B cell (primary cell): ENCODE measurements at regions of chr17 and their contacts with region 1.

Region 1: GRCh38 chr17:82105882-82106687 is 8.0 kb upstream of the FASN start:
- DNase-seq: peak; percentile 76
- ATAC-seq: peak; percentile 96
- H3K4me3 ChIP-seq: peak overlapping the region; percentile 53 to 80 (median 60)
- H3K4me3 Mint-ChIP-seq: peak overlapping the region; percentile 94
- H3K27ac ChIP-seq: peak overlapping the region; percentile 75 to 79
- H3K27ac Mint-ChIP-seq: peak overlapping the region; percentile 98
- H3K4me1 ChIP-seq: peaks cover 18 to 25% of the 10 kb centered on the region in 2 donors
- H3K4me1 Mint-ChIP-seq: peaks cover 21% of the 10 kb centered on the region
- H3K27me3 ChIP-seq: no peaks in the 10 kb centered on the region
- H3K27me3 Mint-ChIP-seq: no peaks in the 10 kb centered on the region
- CTCF ChIP-seq: peak; percentile 34

Region 2: DNA sequence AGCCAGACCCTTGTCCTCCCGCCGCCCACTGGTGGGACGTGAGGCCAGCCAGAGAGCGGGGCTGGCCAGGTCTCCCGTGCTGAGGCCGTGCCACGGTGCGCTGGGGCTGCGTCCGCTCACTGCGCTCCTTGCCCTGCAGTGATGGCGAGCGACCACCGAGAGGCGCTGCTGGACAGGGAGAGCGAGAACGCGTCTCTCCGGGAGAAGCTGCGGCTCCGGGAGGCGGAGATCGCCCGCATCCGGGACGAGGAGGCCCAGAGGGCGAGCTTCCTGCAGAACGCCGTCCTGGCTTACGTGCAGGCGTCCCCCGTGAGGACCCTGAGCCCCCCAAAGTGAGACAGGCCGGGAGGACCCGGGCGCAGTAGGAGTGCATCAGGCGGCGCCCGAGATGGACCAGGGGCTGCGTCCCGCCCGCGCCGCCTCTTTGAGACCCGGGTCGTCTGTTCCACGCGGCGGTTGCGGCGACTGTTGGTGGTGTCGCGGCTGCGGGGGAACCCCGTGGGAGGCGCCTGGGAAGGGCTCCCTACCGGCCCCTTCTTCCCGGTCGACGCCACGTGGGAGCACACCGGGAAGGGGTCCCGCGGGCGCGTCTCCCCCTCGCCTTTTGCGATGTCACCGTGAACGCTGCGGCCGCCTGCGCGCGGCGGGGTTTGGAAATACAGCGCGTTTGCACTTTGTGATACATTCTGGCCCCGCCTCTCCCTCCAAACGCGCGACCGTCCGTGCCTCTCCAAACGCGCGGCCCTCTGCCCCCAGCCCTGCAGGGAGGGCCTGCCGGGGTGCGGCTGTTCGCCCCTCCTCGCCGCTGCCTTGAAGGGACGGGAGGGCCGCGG is 75.4 kb before region 1 on chr17:
- CTCF ChIA-PET with region 1: interaction called, 6 read pairs
- POLR2A ChIA-PET with region 1: no interaction called
- intact Hi-C with region 1: loop called (anchors 1 kb)
- DNase-seq: peak; percentile 86
- ATAC-seq: peak; percentile 89
- H3K4me3 ChIP-seq: peak overlapping the region in 4 of 5 experiments; percentile 45 to 59 (median 54)
- H3K4me3 Mint-ChIP-seq: peak overlapping the region; percentile 89
- H3K27ac ChIP-seq: no peak overlapping the region
- H3K27ac Mint-ChIP-seq: peak overlapping the region; percentile 41
- H3K4me1 ChIP-seq: peaks cover 17 to 21% of the 10 kb centered on the region in 2 donors
- H3K4me1 Mint-ChIP-seq: peaks cover 17% of the 10 kb centered on the region
- H3K27me3 ChIP-seq: peaks cover 0 to 39% (median 3%) of the 10 kb centered on the region in 4 experiments
- H3K27me3 Mint-ChIP-seq: no peaks in the 10 kb centered on the region
- CTCF ChIP-seq: peak; percentile 94

Region 3: GRCh38 chr17:82153745-82154375 is 47.8 kb after region 1 on chr17:
- CTCF ChIA-PET with region 1: no interaction called
- POLR2A ChIA-PET with region 1: no interaction called
- intact Hi-C with region 1: loop called (anchors 2 kb)
- DNase-seq: peak; percentile 84
- ATAC-seq: peak; percentile 99
- H3K4me3 ChIP-seq: no peak overlapping the region
- H3K4me3 Mint-ChIP-seq: no peak overlapping the region
- H3K27ac ChIP-seq: no peak overlapping the region
- H3K27ac Mint-ChIP-seq: no peak overlapping the region
- H3K4me1 ChIP-seq: peaks cover 0 to 2% of the 10 kb centered on the region in 2 donors
- H3K4me1 Mint-ChIP-seq: no peaks in the 10 kb centered on the region
- H3K27me3 ChIP-seq: no peaks in the 10 kb centered on the region
- H3K27me3 Mint-ChIP-seq: no peaks in the 10 kb centered on the region
- CTCF ChIP-seq: peak; percentile 94

Region 4: DNA sequence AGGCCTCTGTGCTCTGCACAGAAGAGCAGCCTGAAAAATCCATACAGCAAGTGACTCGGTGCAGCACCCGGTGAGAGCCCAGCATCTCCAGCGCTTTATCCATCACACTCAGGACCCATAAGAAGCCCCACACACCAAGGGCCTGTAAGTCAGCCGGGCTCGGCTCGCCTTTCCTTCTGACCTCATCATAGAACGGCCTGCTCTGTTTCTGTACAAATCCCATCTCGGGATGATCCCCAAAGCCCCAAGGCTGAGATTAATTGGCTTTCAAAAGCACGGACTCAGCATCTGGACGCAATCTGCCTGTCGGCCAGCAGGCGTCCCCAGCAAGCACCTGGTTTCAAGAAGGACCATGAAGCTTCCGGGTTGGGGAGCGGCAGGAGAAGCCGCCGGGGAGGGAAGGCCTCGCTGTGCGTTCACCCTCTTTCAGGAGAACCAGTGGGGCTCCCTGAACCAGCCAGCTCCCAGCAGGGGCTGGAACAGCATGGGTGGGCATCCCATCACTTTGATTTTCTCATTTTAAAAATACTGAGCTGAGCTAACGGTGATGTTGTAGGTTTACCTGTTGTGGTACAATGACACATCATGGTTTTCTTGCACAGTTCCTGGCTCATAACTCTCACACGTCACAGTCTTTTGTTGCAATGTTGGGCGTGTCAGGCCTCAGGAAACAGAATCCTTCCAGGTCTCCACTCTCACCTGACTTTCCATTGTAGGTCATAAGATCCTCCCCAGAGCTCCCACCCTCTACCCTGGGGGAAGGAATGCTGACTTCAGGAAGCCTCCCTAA is 99.8 kb after region 1 on chr17:
- CTCF ChIA-PET with region 1: no interaction called
- POLR2A ChIA-PET with region 1: interaction called, 12 read pairs
- intact Hi-C with region 1: no loop called
- DNase-seq: peak; percentile 89
- ATAC-seq: peak; percentile 98
- H3K4me3 ChIP-seq: peak overlapping the region in 3 of 5 experiments; percentile 3 to 34 (median 21)
- H3K4me3 Mint-ChIP-seq: peak overlapping the region; percentile 54
- H3K27ac ChIP-seq: peak overlapping the region; percentile 73
- H3K27ac Mint-ChIP-seq: peak overlapping the region; percentile 90
- H3K4me1 ChIP-seq: peaks cover 10 to 11% of the 10 kb centered on the region in 2 donors
- H3K4me1 Mint-ChIP-seq: peaks cover 19% of the 10 kb centered on the region
- H3K27me3 ChIP-seq: no peaks in the 10 kb centered on the region
- H3K27me3 Mint-ChIP-seq: no peaks in the 10 kb centered on the region
- CTCF ChIP-seq: peak; percentile 93